ENCODE measurements at regions of chr3 and their contacts with region 1.

Region 1: GRCh38 chr3:48240711-48241491 is at the start of gene ZNF589:
- DNase-seq: peak; percentile 90 to 96 (median 90)
- ATAC-seq: peak; percentile 96
- H3K4me3 ChIP-seq: peak within 1 kb of the TSS; percentile 79
- H3K27ac ChIP-seq: peak within 1 kb of the TSS; percentile 98
- H3K4me1 ChIP-seq: peaks cover 21 to 28% of the 10 kb centered on the region in 2 experiments; a peak in 4 of 5 replicates
- H3K27me3 ChIP-seq: no peaks in the 10 kb centered on the region
- CTCF ChIP-seq: peak; percentile 27 to 49 (median 28); a peak in 3 of 6 replicates
- EP300 ChIP-seq: no peak
- POLR2A ChIP-seq: peak; percentile 88
- RAD21 ChIP-seq: no peak
- polyA plus RNA-seq, gene ZNF589: 4.2 to 17.6 TPM

Region 2: DNA sequence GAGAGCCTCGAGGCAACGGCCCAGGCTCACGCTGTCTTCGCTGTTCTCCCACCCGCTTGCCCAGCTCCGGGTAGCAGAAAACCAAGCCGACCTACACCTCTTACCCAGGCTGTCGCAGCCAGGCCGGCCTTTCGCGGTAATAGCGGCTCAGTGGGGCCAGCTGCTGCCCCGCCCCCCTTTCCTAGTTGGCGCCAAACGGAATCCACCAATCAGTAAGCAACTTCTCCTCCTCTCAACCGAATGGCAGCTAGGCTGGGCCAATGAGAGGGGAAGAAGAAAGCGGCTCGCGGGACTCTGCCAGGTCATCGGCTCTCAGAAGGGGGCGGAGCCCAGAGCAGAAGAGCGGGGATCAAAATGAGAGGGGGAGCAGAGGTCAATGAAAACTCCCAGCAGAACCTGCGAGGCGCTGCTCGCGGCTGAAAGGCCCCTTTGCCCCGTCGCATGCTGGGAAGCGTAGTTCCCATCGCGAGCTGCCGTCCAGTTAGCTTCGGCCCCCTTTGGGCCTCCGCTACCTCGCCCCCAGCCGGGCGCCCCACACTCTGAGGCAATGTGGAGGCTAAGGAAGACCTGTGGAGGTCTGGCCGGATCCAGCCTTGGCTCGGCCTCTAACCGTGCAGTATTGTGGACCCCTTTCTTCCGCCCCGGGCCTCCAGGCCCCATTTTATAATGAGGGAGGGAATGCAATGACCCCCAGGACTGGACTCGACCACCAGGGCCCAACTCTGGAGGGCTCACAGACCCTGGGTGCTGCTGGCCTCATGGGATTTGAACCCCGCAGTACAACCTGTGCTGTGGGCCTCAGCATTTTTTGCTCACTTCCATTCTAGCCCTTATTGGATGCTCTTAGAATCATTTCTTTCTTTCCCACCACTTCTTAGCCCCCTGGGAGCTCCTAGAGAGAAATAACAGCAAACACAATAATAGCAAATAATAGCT is 52.4 kb before region 1 on chr3 and contains the start of gene CDC25A:
- CTCF ChIA-PET with region 1: no interaction called
- POLR2A ChIA-PET with region 1: interaction called, 5 read pairs
- in situ Hi-C with region 1: no loop called
- intact Hi-C with region 1: loop called (anchors 2 kb)
- DNase-seq: peak; percentile 90 to 97 (median 94)
- ATAC-seq: peak; percentile 98
- H3K4me3 ChIP-seq: peak within 1 kb of the TSS; percentile 83
- H3K27ac ChIP-seq: peak within 1 kb of the TSS; percentile 89
- H3K4me1 ChIP-seq: peaks cover 0 to 15% of the 10 kb centered on the region in 2 experiments; a peak in 3 of 5 replicates
- H3K27me3 ChIP-seq: no peaks in the 10 kb centered on the region
- CTCF ChIP-seq: no peak
- EP300 ChIP-seq: no peak
- POLR2A ChIP-seq: peak; percentile 86
- RAD21 ChIP-seq: no peak
- polyA plus RNA-seq, gene CDC25A: 3.4 to 5.0 TPM